ENCODE measurements at regions of chr19 and their contacts with region 1.

Region 1: GRCh38 chr19:45584332-45585157 is at the start of gene OPA3:
- DNase-seq: peak; percentile 88 to 100 (median 99)
- ATAC-seq: peak; percentile 92
- H3K4me3 ChIP-seq: peak within 1 kb of the TSS; percentile 85
- H3K4me3 Mint-ChIP-seq: peak within 1 kb of the TSS; percentile 90 to 99 (median 94)
- H3K27ac ChIP-seq: peak within 1 kb of the TSS; percentile 99
- H3K27ac Mint-ChIP-seq: peak within 1 kb of the TSS; percentile 97 to 100 (median 99)
- H3K4me1 ChIP-seq: peaks cover 6 to 10% of the 10 kb centered on the region in 2 donors
- H3K4me1 Mint-ChIP-seq: peaks cover 0 to 28% (median 20%) of the 10 kb centered on the region in 7 donors
- H3K27me3 ChIP-seq: no peaks in the 10 kb centered on the region
- H3K27me3 Mint-ChIP-seq: peaks cover 5 to 9% (median 7%) of the 10 kb centered on the region in 5 donors
- total RNA-seq, gene OPA3: 7.8 to 14.3 (median 9.0) TPM

Region 2: GRCh38 chr19:45423589-45424190 is 160.9 kb before region 1 on chr19 and contains the start of gene ERCC1:
- CTCF ChIA-PET with region 1: no interaction called
- POLR2A ChIA-PET with region 1: no interaction called
- intact Hi-C with region 1: loop called in 1 of 2 experiments (anchors 5 kb)
- DNase-seq: peak in 7 of 9 donors; percentile 25 to 83 (median 52)
- ATAC-seq: peak; percentile 71
- H3K4me3 ChIP-seq: peak within 1 kb of the TSS; percentile 72
- H3K4me3 Mint-ChIP-seq: peak within 1 kb of the TSS; percentile 88 to 100 (median 94)
- H3K27ac ChIP-seq: peak within 1 kb of the TSS; percentile 77
- H3K27ac Mint-ChIP-seq: peak within 1 kb of the TSS; percentile 83 to 97 (median 91)
- H3K4me1 ChIP-seq: peaks cover 24 to 28% of the 10 kb centered on the region in 2 donors
- H3K4me1 Mint-ChIP-seq: peaks cover 22 to 57% (median 50%) of the 10 kb centered on the region in 7 donors
- H3K27me3 ChIP-seq: peaks cover 0 to 3% of the 10 kb centered on the region in 2 donors
- H3K27me3 Mint-ChIP-seq: peaks cover 0 to 10% (median 3%) of the 10 kb centered on the region in 5 donors
- total RNA-seq, gene ERCC1: 45.1 to 88.2 (median 53.4) TPM

Region 3: GRCh38 chr19:45485305-45486077 is 99.1 kb before region 1 on chr19:
- CTCF ChIA-PET with region 1: interaction called, 3 read pairs
- POLR2A ChIA-PET with region 1: no interaction called
- intact Hi-C with region 1: loop called (anchors 1 kb)
- DNase-seq: peak; percentile 91 to 98 (median 95)
- ATAC-seq: peak; percentile 99
- H3K4me3 ChIP-seq: peak overlapping the region; percentile 85
- H3K4me3 Mint-ChIP-seq: peak overlapping the region; percentile 83 to 96 (median 90)
- H3K27ac ChIP-seq: peak overlapping the region; percentile 60
- H3K27ac Mint-ChIP-seq: peak overlapping the region in 8 of 9 donors; percentile 34 to 88 (median 82)
- H3K4me1 ChIP-seq: peaks cover 0 to 4% of the 10 kb centered on the region in 2 donors
- H3K4me1 Mint-ChIP-seq: peaks cover 0 to 13% (median 5%) of the 10 kb centered on the region in 7 donors
- H3K27me3 ChIP-seq: no peaks in the 10 kb centered on the region
- H3K27me3 Mint-ChIP-seq: peaks cover 0 to 7% (median 0%) of the 10 kb centered on the region in 5 donors

Region 4: DNA sequence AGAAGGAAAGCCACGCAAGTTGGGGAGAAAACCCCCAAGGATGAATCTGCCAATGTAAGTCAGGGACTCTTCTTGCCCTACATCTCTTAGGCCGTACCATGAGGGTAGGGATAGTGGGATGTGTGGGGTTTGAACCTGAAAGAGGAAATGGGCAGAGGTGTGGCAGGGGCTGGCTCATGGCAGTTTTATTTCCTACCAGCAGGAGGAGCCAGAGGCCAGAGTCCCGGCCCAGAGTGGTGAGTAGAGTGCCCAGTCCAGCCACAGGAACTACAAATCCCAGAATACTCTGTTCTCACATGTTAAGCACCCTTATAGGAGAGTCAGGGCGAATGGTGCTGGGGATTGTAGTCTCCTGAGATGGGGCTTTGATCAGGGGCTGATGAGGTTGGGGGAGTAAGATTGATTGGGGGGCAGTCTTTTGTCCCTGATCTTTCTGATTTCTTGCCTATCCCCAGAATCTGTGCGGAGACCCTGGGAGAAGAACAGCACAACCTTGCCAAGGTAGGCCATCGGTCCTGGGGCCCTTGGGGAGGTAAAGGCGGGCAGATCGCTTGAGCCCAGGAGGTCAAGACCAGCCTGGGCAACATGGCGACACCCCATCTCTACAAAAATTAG is 60.8 kb before region 1 on chr19:
- CTCF ChIA-PET with region 1: no interaction called
- POLR2A ChIA-PET with region 1: no interaction called
- intact Hi-C with region 1: loop called in 1 of 2 experiments (anchors 1 kb)
- DNase-seq: peak; percentile 54 to 85 (median 83)
- ATAC-seq: peak; percentile 100
- H3K4me3 ChIP-seq: no peak overlapping the region
- H3K4me3 Mint-ChIP-seq: no peak overlapping the region
- H3K27ac ChIP-seq: no peak overlapping the region
- H3K27ac Mint-ChIP-seq: peak overlapping the region in 8 of 9 donors; percentile 26 to 88 (median 65)
- H3K4me1 ChIP-seq: no peaks in the 10 kb centered on the region
- H3K4me1 Mint-ChIP-seq: peaks cover 11 to 24% (median 17%) of the 10 kb centered on the region in 7 donors
- H3K27me3 ChIP-seq: no peaks in the 10 kb centered on the region
- H3K27me3 Mint-ChIP-seq: no peaks in the 10 kb centered on the region

Region 5: GRCh38 chr19:45717166-45717982 is 132.8 kb after region 1 on chr19:
- CTCF ChIA-PET with region 1: no interaction called
- POLR2A ChIA-PET with region 1: no interaction called
- intact Hi-C with region 1: loop called (anchors 1 kb)
- DNase-seq: peak; percentile 92 to 99 (median 98)
- ATAC-seq: peak; percentile 98
- H3K4me3 ChIP-seq: peak overlapping the region; percentile 80
- H3K4me3 Mint-ChIP-seq: peak overlapping the region; percentile 89 to 99 (median 95)
- H3K27ac ChIP-seq: peak overlapping the region; percentile 89
- H3K27ac Mint-ChIP-seq: peak overlapping the region; percentile 88 to 97 (median 96)
- H3K4me1 ChIP-seq: peaks cover 17 to 26% of the 10 kb centered on the region in 2 donors
- H3K4me1 Mint-ChIP-seq: peaks cover 26 to 55% (median 38%) of the 10 kb centered on the region in 7 donors
- H3K27me3 ChIP-seq: no peaks in the 10 kb centered on the region
- H3K27me3 Mint-ChIP-seq: no peaks in the 10 kb centered on the region

Measured in naive thymus-derived CD4-positive, alpha-beta T cell (primary cell).